Cardiac septum (tissue), 1 donor: ENCODE measurements at regions of chr3 and their contacts with region 1.

Region 1: GRCh38 chr3:130892759-130893375 is 1.0 kb upstream of the ATP2C1 start:
- DNase-seq: no peak

Region 2: GRCh38 chr3:130759699-130760338 is 133.0 kb before region 1 on chr3:
- intact Hi-C with region 1: loop called (anchors 1 kb)
- DNase-seq: no peak

Region 3: DNA sequence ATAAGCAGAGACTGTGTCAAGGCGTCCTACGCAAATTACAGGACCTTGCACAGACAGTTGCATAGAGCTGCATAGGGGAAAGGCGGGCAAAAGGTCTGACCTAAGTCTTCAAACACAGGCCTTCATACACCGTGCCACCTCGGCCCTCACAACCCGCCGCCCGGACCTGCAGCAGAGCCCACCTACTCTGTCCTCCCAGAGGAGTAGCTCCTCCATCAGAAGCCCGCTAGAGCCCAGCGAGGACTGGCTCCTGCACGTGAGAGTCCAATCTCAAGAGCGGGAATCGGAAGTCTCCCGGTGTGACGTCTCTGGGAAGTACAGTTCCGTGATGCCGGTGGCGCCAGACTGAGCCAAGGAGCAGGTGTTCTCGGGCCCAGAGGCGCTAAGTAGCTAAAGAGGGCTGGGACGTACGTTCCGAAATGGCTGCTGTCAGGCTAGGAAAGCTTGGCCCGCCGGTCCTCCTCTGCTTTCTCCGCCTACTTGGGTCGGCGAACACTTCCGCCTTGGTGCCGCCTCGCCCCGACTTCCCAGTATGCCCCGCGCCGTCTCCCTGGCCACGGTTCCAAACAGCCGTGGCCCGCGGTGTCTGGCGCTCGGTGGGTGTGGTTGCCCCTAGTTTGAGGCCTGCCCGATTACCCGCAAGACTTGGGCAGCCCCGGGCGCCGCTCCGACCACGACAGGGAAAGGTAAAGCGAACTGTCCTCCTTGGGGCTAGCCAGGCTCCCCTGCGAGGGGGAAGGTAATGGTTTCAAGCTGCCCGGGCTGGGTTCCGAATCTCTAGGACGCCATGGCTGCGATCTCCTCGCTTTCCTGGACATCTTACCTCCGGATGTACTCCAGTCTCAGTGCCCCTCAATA is 133.7 kb after region 1 on chr3 and contains the starts of genes ASTE1 and NEK11:
- intact Hi-C with region 1: loop called (anchors 2 kb)
- DNase-seq: peak; percentile 97
- total RNA-seq, gene ASTE1: 3.2 TPM
- total RNA-seq, gene NEK11: 2.8 TPM